ENCODE measurements at regions of chr15 and their contacts with region 1.

Region 1: DNA sequence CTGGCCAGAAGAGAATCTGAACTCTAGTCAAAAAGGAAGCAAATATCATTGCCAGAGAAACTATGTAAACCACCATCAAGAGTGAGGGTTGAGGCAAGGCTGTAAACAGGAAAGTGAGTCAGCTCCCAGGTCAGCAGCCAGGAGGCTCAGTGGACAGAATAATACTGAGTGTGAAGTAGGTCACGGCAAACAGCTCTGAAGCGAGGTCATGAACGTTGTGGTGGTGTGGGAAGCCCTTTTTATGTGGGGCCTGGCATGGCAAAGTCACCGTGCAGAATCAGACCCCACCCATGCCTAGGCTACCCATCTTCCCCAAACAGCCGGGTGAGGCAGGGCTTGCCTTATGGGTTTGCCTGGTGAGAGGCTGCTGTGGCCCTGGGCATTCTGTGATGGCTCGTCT is 43.9 kb downstream of the THBS1 start:
- DNase-seq: peak; percentile 33 to 52
- ATAC-seq: peak; percentile 58 to 85 (median 75)
- H3K4me3 ChIP-seq: no peak overlapping the region
- H3K27ac ChIP-seq: peak overlapping the region; percentile 26 to 87 (median 74)
- H3K4me1 ChIP-seq: peaks cover 21 to 68% (median 46%) of the 10 kb centered on the region in 9 donors
- H3K27me3 ChIP-seq: no peaks in the 10 kb centered on the region
- CTCF ChIP-seq: peak in 1 of 9 donors; percentile 27

Region 2: DNA sequence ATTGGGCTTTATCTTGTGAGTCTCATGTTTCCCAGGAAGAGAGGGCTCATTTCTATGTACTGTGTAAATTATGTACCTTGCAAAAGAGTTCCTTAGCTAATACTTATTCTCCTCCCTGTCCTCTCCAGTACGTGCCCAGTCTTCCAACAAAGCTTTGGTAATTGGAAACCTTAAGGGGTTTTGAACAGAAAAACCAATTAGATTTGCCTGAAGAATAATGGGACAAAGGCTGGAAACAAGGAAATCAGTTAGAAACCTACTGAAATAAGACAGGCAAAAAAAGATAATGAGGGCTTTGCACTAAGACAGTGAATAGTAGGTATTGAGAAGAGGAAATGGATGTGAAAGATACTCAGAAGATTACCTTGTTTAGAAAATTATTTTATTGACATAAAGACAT is 1289.7 kb before region 1 on chr15:
- intact Hi-C with region 1: no loop called
- DNase-seq: no peak
- ATAC-seq: no peak
- H3K4me3 ChIP-seq: no peak overlapping the region
- H3K27ac ChIP-seq: no peak overlapping the region
- H3K4me1 ChIP-seq: no peaks in the 10 kb centered on the region
- H3K27me3 ChIP-seq: no peaks in the 10 kb centered on the region
- CTCF ChIP-seq: no peak

Region 3: GRCh38 chr15:39686000-39686613 is 61.3 kb after region 1 on chr15:
- intact Hi-C with region 1: loop called in 1 of 10 experiments (anchors 5 kb)
- DNase-seq: peak in 1 of 2 donors; percentile 32
- ATAC-seq: peak in 6 of 8 donors; percentile 59 to 78 (median 66)
- H3K4me3 ChIP-seq: no peak overlapping the region
- H3K27ac ChIP-seq: no peak overlapping the region
- H3K4me1 ChIP-seq: no peaks in the 10 kb centered on the region
- H3K27me3 ChIP-seq: no peaks in the 10 kb centered on the region
- CTCF ChIP-seq: peak; percentile 55 to 88 (median 84)

Measured in heart right ventricle (tissue), 16 donors.